Right ventricle myocardium superior (tissue), 1 donor: ENCODE measurements at regions of chr1 and their contacts with region 1.

Region 1: DNA sequence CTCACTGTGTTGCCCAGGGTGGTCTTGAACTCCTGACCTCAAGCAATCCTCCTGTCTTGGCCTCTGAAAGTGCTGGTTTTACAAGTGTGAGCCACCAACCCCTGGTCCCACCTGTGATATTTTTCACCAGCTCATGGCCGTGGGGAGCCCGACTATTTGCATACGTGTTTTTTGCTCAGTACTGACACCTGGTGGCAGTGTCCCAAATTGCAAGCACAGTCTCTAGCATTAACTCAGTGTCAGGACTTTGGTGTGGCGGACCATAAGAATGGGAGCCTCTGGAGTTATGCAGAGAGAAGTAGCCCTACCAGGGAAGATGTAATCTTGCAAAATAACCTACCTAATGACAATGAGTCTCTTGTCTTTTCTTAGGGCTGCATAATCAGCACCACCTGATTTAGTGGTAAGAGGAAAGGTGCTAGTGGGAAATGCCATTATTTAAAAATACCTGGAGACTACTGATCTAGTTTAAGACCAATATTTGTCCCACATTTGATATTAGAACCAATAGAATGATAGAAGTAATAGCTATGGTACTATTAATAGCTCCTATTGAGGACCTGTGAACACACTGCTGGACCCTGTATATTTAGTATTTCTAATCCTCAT is 305.4 kb downstream of the DISC1 start:
- DNase-seq: no peak
- ATAC-seq: no peak

Region 2: DNA sequence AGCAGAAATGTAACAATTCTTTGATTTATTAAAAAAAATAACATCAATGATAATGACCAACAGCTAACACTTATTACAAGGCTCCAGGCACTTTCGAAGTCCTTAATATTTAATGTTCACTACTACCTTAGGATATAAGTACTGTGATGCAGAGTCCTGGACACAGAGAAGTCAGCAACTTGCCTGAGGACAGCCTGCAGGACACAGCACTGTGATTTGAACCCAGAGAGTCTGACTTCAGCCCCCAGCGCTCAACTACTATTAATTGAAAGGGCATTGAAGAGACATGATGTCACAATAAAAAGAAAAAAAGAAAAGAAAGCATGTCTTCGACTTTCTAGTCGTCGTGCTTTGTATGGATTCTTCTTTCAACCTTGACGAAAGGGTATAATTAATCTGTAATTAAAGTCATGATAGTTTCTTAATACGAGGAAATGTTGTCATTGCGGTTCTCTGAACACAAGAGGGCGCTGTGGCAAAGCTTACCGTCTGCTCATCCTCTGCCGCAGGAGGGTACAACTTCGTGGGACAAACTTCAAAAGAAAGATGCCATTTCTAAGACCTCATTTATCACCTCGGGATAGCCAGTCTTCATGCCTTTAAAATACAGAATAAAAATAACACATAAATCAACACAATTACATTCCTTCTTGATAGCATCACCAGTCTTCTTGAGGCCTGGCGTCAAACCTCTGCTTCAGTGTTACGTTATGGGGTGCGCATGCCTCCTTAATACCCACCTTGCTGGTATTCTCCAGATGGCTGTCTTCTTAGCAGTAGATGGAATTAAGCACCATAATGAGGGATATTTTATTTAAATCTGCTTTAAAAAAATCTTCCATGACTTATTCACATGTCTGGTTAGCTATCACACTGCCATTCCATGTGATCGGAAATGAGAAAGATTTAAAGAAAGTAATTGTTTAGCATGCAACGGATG is 65.3 kb before region 1 on chr1:
- intact Hi-C with region 1: loop called (anchors 5 kb)
- DNase-seq: peak; percentile 64
- ATAC-seq: peak; percentile 58

Region 3: GRCh38 chr1:232319072-232319471 is 387.1 kb after region 1 on chr1:
- intact Hi-C with region 1: loop called (anchors 10 kb)
- DNase-seq: peak; percentile 91
- ATAC-seq: peak; percentile 94